Ascending aorta (tissue), 2 donors: ENCODE measurements at regions of chr13 and their contacts with region 1.

Region 1: GRCh38 chr13:50081679-50082425 is 66.6 kb downstream of the KCNRG start:
- DNase-seq: peak; percentile 95 to 99
- H3K4me3 ChIP-seq: peak overlapping the region; percentile 78 to 95
- H3K27ac ChIP-seq: peak overlapping the region; percentile 89 to 96
- H3K4me1 ChIP-seq: peaks cover 0 to 6% of the 10 kb centered on the region in 2 donors
- H3K27me3 ChIP-seq: no peaks in the 10 kb centered on the region
- CTCF ChIP-seq: peak in 1 of 3 experiments; percentile 38

Region 2: GRCh38 chr13:48492470-48493065 is 1589.3 kb before region 1 on chr13:
- intact Hi-C with region 1: no loop called
- DNase-seq: peak; percentile 47 to 78
- H3K4me3 ChIP-seq: peak overlapping the region in 1 of 2 donors; percentile 8
- H3K27ac ChIP-seq: peak overlapping the region; percentile 28 to 50
- H3K4me1 ChIP-seq: no peaks in the 10 kb centered on the region
- H3K27me3 ChIP-seq: no peaks in the 10 kb centered on the region
- CTCF ChIP-seq: no peak

Region 3: GRCh38 chr13:49690992-49691886 is 390.6 kb before region 1 on chr13 and contains the start of gene EBPL:
- intact Hi-C with region 1: loop called (anchors 5 kb)
- DNase-seq: peak; percentile 72 to 95
- H3K4me3 ChIP-seq: peak within 1 kb of the TSS; percentile 84 to 93
- H3K27ac ChIP-seq: peak within 1 kb of the TSS; percentile 66 to 88
- H3K4me1 ChIP-seq: peaks cover 0 to 3% of the 10 kb centered on the region in 2 donors
- H3K27me3 ChIP-seq: no peaks in the 10 kb centered on the region
- CTCF ChIP-seq: no peak
- total RNA-seq, gene EBPL: 18.3 TPM

Region 4: GRCh38 chr13:49976314-49977258 is 105.3 kb before region 1 on chr13:
- intact Hi-C with region 1: loop called (anchors 5 kb)
- DNase-seq: peak in 1 of 2 donors; percentile 80
- H3K4me3 ChIP-seq: no peak overlapping the region
- H3K27ac ChIP-seq: no peak overlapping the region
- H3K4me1 ChIP-seq: no peaks in the 10 kb centered on the region
- H3K27me3 ChIP-seq: no peaks in the 10 kb centered on the region
- CTCF ChIP-seq: peak; percentile 66 to 84 (median 80)

Region 5: DNA sequence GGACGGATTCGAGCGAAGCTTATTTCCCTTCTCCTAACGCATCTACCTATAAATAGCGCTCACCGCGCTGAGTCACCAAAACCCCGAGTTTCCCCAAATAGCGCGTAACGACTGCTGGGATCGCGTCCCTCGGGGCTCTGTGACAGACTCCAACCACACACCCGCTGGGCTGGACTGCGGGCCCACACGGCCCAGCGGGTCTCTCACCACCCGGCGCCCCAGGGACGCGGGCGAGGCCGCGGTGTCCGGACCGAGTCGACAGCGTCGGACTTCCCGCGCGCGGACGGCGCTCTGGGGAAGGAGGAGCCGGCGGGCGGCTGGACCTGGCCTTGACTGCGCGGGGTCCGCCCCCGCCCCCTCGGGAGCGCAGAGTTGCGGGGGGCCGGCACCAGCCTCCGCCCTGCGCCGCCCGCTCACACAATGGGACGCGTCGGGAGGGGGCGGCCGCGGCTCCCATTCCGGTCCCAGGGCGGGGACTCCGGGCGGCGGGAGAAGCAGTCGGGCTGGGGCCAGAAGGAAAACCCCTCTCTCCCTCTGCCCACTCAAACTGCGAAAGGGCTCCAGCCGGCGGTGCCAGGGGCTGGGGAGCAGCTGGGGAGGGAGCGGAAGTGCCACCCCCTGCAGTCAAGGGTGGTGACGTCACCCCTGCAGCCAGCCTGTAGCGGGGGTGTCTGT is 42.1 kb after region 1 on chr13:
- intact Hi-C with region 1: loop called (anchors 1 kb)
- DNase-seq: peak; percentile 92 to 98
- H3K4me3 ChIP-seq: peak overlapping the region; percentile 76 to 90
- H3K27ac ChIP-seq: peak overlapping the region; percentile 100
- H3K4me1 ChIP-seq: peaks cover 0 to 20% of the 10 kb centered on the region in 2 donors
- H3K27me3 ChIP-seq: no peaks in the 10 kb centered on the region
- CTCF ChIP-seq: no peak

Region 6: GRCh38 chr13:50357586-50358118 is 275.8 kb after region 1 on chr13:
- intact Hi-C with region 1: loop called (anchors 5 kb)
- DNase-seq: peak in 1 of 2 donors; percentile 79
- H3K4me3 ChIP-seq: no peak overlapping the region
- H3K27ac ChIP-seq: peak overlapping the region; percentile 74 to 78
- H3K4me1 ChIP-seq: peaks cover 0 to 19% of the 10 kb centered on the region in 2 donors
- H3K27me3 ChIP-seq: no peaks in the 10 kb centered on the region
- CTCF ChIP-seq: no peak

Region 7: GRCh38 chr13:50801087-50801931 is 719.5 kb after region 1 on chr13:
- intact Hi-C with region 1: loop called (anchors 2 kb)
- DNase-seq: peak in 1 of 2 donors; percentile 64
- H3K4me3 ChIP-seq: no peak overlapping the region
- H3K27ac ChIP-seq: no peak overlapping the region
- H3K4me1 ChIP-seq: peaks cover 0 to 5% of the 10 kb centered on the region in 2 donors
- H3K27me3 ChIP-seq: no peaks in the 10 kb centered on the region
- CTCF ChIP-seq: peak; percentile 57 to 70 (median 63)